ENCODE measurements at regions of chr12 and their contacts with region 1.

Region 1: GRCh38 chr12:57213058-57213715 is 3.4 kb upstream of the NXPH4 start:
- DNase-seq: peak; percentile 83 to 92
- ATAC-seq: peak; percentile 75 to 83 (median 78)
- H3K4me3 ChIP-seq: no peak overlapping the region
- H3K4me3 Mint-ChIP-seq: peak overlapping the region; percentile 63
- H3K27ac ChIP-seq: no peak overlapping the region
- H3K27ac Mint-ChIP-seq: peak overlapping the region; percentile 28 to 43
- H3K4me1 ChIP-seq: peaks cover 47% of the 10 kb centered on the region
- H3K4me1 Mint-ChIP-seq: peaks cover 31 to 45% of the 10 kb centered on the region in 2 donors
- H3K27me3 ChIP-seq: peaks cover 43% of the 10 kb centered on the region
- H3K27me3 Mint-ChIP-seq: peaks cover 33 to 42% of the 10 kb centered on the region in 2 donors
- CTCF ChIP-seq: peak; percentile 96

Region 2: GRCh38 chr12:56487448-56488040 is 725.6 kb before region 1 on chr12:
- intact Hi-C with region 1: no loop called
- DNase-seq: peak in 1 of 2 donors; percentile 54
- ATAC-seq: peak; percentile 5 to 33 (median 30)
- H3K4me3 ChIP-seq: peak overlapping the region; percentile 61
- H3K4me3 Mint-ChIP-seq: peak overlapping the region; percentile 95
- H3K27ac ChIP-seq: no peak overlapping the region
- H3K27ac Mint-ChIP-seq: peak overlapping the region in 1 of 2 donors; percentile 71
- H3K4me1 ChIP-seq: peaks cover 18% of the 10 kb centered on the region
- H3K4me1 Mint-ChIP-seq: peaks cover 13 to 18% of the 10 kb centered on the region in 2 donors
- H3K27me3 ChIP-seq: peaks cover 10% of the 10 kb centered on the region
- H3K27me3 Mint-ChIP-seq: peaks cover 22 to 26% of the 10 kb centered on the region in 2 donors
- CTCF ChIP-seq: no peak

Region 3: DNA sequence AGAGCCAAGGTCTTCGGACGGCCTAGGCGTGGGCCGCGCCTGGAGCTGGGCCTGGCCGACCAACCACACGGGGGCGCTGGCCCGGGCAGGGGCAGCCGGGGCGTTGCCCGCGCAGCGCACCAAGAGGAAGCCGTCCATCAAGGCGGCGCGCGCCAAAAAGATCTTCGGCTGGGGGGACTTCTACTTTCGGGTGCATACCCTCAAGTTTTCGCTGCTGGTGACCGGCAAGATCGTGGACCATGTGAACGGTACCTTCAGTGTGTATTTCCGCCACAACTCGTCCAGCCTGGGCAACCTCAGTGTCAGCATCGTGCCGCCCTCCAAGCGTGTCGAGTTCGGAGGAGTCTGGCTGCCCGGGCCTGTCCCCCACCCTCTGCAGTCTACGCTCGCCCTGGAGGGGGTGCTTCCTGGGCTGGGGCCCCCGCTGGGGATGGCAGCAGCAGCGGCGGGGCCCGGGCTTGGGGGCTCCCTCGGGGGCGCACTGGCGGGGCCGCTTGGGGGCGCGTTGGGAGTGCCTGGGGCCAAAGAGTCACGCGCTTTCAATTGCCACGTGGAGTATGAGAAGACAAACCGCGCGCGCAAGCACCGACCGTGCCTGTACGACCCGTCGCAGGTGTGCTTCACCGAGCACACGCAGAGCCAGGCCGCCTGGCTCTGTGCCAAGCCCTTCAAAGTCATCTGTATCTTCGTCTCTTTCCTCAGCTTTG is 11.9 kb after region 1 on chr12:
- intact Hi-C with region 1: loop called (anchors 1 kb)
- DNase-seq: peak; percentile 63 to 90
- ATAC-seq: no peak
- H3K4me3 ChIP-seq: no peak overlapping the region
- H3K4me3 Mint-ChIP-seq: peak overlapping the region; percentile 47
- H3K27ac ChIP-seq: no peak overlapping the region
- H3K27ac Mint-ChIP-seq: peak overlapping the region in 1 of 2 donors; percentile 82
- H3K4me1 ChIP-seq: peaks cover 92% of the 10 kb centered on the region
- H3K4me1 Mint-ChIP-seq: peaks cover 54 to 82% of the 10 kb centered on the region in 2 donors
- H3K27me3 ChIP-seq: peaks cover 57% of the 10 kb centered on the region
- H3K27me3 Mint-ChIP-seq: peaks cover 46 to 58% of the 10 kb centered on the region in 2 donors
- CTCF ChIP-seq: peak; percentile 60

Measured in natural killer cell (primary cell).